Activated CD8-positive, alpha-beta T cell treated with anti-CD3 and anti-CD28 coated beads for 36 hours (primary cell): ENCODE measurements at regions of chr10 and their contacts with region 1.

Region 1: GRCh38 chr10:72048450-72049124 is 39.8 kb downstream of the SPOCK2 start:
- DNase-seq: peak; percentile 95
- ATAC-seq: peak; percentile 98
- H3K4me3 Mint-ChIP-seq: no peak overlapping the region
- H3K27ac Mint-ChIP-seq: no peak overlapping the region
- H3K4me1 Mint-ChIP-seq: peaks cover 15% of the 10 kb centered on the region
- H3K27me3 Mint-ChIP-seq: no peaks in the 10 kb centered on the region
- CTCF ChIP-seq: peak; percentile 97

Region 2: DNA sequence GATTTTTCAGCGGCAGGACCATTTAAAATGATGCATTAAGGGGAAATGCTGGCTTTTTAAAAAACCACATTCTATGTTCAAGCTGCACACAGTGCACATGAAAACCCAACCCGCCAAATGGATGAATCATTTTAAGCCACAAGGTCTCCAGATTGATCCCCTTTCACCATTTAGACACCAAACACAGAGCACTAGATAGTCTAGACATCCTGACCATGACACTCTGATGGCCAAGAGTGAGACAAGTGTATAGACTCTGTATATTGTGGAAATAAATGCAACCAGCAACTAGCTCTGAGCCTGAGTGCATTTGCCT is 226.2 kb before region 1 on chr10:
- CTCF ChIA-PET with region 1: no interaction called
- POLR2A ChIA-PET with region 1: no interaction called
- intact Hi-C with region 1: no loop called
- DNase-seq: peak; percentile 56
- ATAC-seq: peak; percentile 83
- H3K4me3 Mint-ChIP-seq: no peak overlapping the region
- H3K27ac Mint-ChIP-seq: peak overlapping the region; percentile 25
- H3K4me1 Mint-ChIP-seq: peaks cover 15% of the 10 kb centered on the region
- H3K27me3 Mint-ChIP-seq: no peaks in the 10 kb centered on the region
- CTCF ChIP-seq: no peak

Region 3: DNA sequence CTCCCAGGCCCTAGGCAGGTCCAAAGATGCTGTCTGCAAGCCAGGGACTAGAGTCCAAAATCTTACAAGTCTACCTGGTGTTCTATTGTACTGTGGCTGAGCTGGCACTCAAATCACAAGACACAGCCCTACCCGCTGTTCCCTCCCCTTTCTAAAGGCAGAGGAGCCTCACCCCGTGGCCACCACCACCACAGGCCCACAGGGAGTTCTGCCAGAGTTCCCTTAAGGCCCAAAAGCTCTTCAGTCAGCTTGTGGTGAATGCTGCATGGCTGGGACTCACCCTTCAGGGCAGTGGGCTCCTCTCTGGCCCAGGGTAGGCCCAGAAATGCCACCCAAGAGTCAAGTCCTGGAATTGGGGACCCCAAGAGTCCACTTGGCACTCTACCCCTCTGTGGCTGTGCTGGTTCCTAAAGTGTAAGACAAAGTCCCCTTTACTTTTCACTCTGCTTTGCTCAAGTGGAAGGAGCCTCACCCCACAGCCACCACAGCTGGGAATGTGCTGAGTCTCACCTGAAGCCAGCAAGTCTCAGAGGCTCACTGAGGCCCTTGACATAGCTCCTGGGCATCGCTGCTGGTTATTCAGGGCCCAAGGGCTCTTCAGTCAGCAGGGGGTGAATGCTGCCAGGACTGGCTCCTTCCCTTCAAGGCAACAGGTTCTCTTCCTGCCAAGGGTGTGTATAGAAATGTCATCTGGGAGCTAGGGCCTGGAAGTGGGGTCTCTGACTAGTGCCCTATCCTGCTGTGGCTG is 148.7 kb before region 1 on chr10:
- CTCF ChIA-PET with region 1: interaction called, 129 read pairs
- POLR2A ChIA-PET with region 1: no interaction called
- intact Hi-C with region 1: loop called (anchors 5 kb)
- DNase-seq: no peak
- ATAC-seq: no peak
- H3K4me3 Mint-ChIP-seq: no peak overlapping the region
- H3K27ac Mint-ChIP-seq: no peak overlapping the region
- H3K4me1 Mint-ChIP-seq: no peaks in the 10 kb centered on the region
- H3K27me3 Mint-ChIP-seq: no peaks in the 10 kb centered on the region
- CTCF ChIP-seq: no peak

Region 4: DNA sequence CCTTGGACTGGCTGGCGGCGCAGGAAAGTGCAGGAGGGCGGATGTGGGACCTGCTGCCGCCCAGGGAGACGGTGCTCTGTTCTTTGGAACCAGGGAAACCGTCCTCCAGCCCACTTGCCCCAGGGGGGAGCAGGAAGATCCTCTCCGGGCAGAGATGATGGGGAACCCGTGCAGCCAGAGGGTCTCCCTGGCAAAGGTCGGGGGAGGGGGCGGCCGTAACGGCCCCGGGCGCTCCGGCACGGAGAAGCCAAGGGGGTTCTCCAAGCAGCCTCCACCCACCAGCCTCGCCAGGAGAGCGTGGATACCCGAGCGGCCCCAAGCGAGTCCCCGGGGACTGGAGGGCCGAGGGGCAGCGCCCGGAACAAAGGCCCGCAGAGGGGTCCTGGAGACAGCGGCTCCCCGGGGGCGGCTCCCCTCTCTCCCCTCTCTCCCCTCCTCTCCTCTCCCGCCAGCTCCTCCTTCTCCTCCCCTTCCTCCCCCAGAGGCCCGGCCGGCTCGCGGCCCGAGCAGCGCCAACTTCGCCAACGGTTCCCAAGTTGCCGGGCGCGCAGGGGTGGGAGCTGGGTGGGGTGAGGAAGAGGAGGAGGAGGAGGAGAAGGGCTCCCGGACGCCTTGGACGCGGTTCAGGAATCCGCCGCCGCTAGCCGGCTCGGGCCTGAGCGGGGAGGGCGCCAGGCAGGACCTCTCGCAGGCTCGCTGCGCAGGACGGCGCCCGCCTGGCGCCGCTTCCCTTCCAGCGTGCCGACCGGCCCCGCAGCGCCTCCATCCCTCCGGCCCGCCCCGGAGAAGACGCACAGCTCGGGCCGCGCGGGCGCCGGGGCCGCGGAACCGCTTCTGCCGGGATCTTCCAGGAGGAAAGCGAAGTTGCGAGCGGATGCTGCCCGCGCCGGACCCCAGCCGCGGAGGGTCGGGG is 84.6 kb before region 1 on chr10 and contains the start of gene CHST3:
- CTCF ChIA-PET with region 1: interaction called, 14 read pairs
- POLR2A ChIA-PET with region 1: no interaction called
- intact Hi-C with region 1: no loop called
- DNase-seq: no peak
- ATAC-seq: peak; percentile 58
- H3K4me3 Mint-ChIP-seq: peak within 1 kb of the TSS; percentile 72
- H3K27ac Mint-ChIP-seq: peak within 1 kb of the TSS; percentile 53
- H3K4me1 Mint-ChIP-seq: peaks cover 19% of the 10 kb centered on the region
- H3K27me3 Mint-ChIP-seq: peaks cover 48% of the 10 kb centered on the region
- CTCF ChIP-seq: no peak
- total RNA-seq, gene CHST3: 0.20 to 0.36 TPM

Region 5: DNA sequence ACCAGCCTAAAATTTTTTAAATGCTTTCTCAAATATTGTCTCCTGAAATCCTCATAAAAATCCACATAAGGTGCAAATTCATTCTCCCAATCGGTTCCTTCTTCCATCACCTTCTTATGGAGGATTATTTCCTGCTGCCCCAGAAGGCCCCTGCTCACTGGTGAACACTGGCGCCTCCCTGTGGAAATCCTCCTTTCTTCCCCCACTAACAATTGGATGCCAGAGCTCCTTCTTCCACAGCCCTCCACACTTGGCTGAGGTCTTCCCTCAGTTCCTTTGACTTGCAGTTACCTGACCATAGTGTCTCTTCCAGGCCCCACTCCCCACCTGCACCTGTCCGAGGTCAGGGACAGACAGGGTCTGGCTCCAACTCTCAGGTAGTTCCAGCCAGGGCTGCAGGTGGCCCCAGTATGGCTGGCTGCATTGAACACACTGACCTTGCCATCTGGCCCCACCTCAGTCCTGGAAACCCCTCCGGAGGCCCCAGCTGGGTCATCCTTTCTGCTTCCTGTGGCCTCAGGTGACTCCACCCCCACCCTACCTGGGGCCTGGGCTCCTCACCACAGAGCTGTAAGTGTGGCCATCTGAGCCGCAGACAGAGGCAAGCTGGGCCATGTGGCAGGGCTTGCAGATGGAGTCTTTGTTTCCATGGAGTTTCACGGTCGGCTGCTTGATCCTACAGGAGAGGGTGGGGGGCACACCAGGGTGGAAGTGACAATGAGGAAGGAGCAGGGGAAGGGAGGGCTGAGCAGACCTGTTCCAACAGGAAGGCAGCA is 21.4 kb after region 1 on chr10:
- CTCF ChIA-PET with region 1: interaction called, 20 read pairs
- POLR2A ChIA-PET with region 1: no interaction called
- intact Hi-C with region 1: no loop called
- DNase-seq: no peak
- ATAC-seq: peak; percentile 24
- H3K4me3 Mint-ChIP-seq: no peak overlapping the region
- H3K27ac Mint-ChIP-seq: peak overlapping the region; percentile 36
- H3K4me1 Mint-ChIP-seq: peaks cover 50% of the 10 kb centered on the region
- H3K27me3 Mint-ChIP-seq: no peaks in the 10 kb centered on the region
- CTCF ChIP-seq: peak; percentile 37

Region 6: DNA sequence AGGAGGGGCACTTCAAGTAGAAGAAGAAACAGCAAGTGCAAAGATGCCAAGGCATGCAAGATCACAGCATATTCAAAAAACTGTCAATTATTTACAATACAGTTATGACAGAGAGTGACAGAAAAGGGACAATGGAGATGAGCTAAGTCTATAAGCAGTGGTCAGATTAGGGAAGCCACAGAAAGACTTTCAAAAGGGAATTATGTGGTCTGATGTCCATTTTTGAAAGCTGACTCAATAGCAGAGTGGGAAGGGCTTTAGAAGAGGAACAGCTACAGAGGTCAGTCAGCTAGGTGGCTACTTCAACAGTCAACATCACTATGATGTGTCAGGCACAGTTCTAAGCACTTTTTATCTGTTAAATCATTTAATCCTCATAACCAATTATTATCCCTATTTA is 84.9 kb after region 1 on chr10:
- CTCF ChIA-PET with region 1: interaction called, 14 read pairs
- POLR2A ChIA-PET with region 1: no interaction called
- intact Hi-C with region 1: no loop called
- DNase-seq: no peak
- ATAC-seq: no peak
- H3K4me3 Mint-ChIP-seq: no peak overlapping the region
- H3K27ac Mint-ChIP-seq: peak overlapping the region; percentile 0
- H3K4me1 Mint-ChIP-seq: peaks cover 35% of the 10 kb centered on the region
- H3K27me3 Mint-ChIP-seq: no peaks in the 10 kb centered on the region
- CTCF ChIP-seq: no peak

Region 7: DNA sequence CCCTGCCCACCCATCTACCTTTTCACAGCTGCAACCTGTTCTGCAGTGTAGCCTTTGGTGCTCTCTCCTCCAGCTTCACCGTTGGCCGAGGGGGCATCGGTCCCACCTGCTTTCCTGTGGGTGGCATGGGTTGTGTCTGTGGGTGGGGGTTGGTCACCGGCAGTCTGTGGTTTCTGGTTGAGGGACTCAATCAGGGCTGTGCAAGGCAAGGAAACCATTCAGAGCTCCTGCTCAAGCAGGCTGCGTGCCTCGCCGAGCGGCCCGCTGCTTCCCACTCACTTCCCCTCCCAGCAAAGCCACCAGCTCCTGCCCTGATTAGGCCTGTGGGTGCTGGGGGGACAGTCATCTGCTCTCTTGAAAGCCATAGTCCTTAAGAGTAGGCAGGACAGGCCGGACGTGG is 296.3 kb after region 1 on chr10:
- CTCF ChIA-PET with region 1: interaction called, 73 read pairs
- POLR2A ChIA-PET with region 1: interaction called, 4 read pairs
- intact Hi-C with region 1: no loop called
- DNase-seq: peak; percentile 64
- ATAC-seq: peak; percentile 60
- H3K4me3 Mint-ChIP-seq: no peak overlapping the region
- H3K27ac Mint-ChIP-seq: peak overlapping the region; percentile 76
- H3K4me1 Mint-ChIP-seq: peaks cover 26% of the 10 kb centered on the region
- H3K27me3 Mint-ChIP-seq: no peaks in the 10 kb centered on the region
- CTCF ChIP-seq: no peak